B cell (primary cell): ENCODE measurements at regions of chr1 and their contacts with region 1.

Region 1: DNA sequence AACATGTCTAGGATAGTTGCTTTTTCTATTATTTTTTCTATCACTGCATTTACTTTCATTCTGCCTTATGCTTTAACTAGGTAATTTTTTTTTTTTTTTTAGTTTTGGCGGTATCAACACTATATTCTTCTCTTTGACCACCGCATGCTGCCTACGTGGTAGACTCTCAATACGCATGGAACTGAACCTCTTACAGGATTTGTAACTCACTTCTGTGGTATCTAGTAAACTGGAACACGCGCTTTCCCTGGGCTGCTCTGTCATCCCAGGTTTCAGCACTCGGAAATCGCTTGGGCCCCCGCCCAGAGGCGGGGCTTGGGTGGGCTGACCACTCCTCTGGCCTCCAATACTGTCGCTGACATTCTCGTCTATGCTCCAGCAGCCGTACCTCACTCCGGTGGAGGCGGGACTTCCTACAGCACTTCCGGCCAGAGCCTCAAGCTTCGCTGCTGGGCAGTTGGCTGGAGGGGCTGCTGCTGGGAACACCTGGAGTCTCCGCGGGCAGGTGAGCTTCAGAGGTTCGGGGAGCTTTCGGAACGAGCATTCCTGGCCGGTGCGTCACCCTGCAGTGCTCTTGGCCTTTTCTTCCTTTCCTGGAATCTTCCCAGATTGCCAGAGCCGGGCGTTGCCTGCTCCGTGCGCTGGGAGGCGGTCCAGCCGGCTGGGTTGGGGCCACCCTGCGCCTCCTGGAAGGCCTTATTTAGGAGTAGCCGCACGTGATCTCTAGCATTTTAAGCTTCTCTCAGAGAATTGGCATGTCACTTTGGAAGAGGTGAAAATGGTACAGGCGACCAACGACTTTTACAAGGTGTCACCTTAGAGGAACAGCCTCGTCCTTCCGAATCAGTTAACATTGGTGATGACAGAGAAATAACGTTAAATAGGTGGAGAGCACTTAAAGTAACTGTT is at the start of gene TBCE:
- DNase-seq: peak; percentile 84
- ATAC-seq: peak; percentile 100
- H3K4me3 ChIP-seq: peak within 1 kb of the TSS; percentile 79 to 97 (median 86)
- H3K4me3 Mint-ChIP-seq: peak within 1 kb of the TSS; percentile 99
- H3K27ac ChIP-seq: peak within 1 kb of the TSS; percentile 59 to 77
- H3K27ac Mint-ChIP-seq: peak within 1 kb of the TSS; percentile 94
- H3K4me1 ChIP-seq: peaks cover 12% of the 10 kb centered on the region in 2 donors
- H3K4me1 Mint-ChIP-seq: peaks cover 25% of the 10 kb centered on the region
- H3K27me3 ChIP-seq: no peaks in the 10 kb centered on the region
- H3K27me3 Mint-ChIP-seq: no peaks in the 10 kb centered on the region
- CTCF ChIP-seq: no peak
- total RNA-seq, gene TBCE: 18.4 and 22.1 TPM in 2 replicates

Region 2: GRCh38 chr1:234478481-234479309 is 888.6 kb before region 1 on chr1 and contains the start of gene TARBP1:
- CTCF ChIA-PET with region 1: no interaction called
- POLR2A ChIA-PET with region 1: no interaction called
- intact Hi-C with region 1: loop called (anchors 2 kb)
- DNase-seq: peak; percentile 93
- ATAC-seq: peak; percentile 68
- H3K4me3 ChIP-seq: peak within 1 kb of the TSS; percentile 46 to 76 (median 68)
- H3K4me3 Mint-ChIP-seq: peak within 1 kb of the TSS; percentile 87
- H3K27ac ChIP-seq: peak within 1 kb of the TSS; percentile 49 to 69
- H3K27ac Mint-ChIP-seq: peak within 1 kb of the TSS; percentile 89
- H3K4me1 ChIP-seq: peaks cover 30 to 36% of the 10 kb centered on the region in 2 donors
- H3K4me1 Mint-ChIP-seq: peaks cover 38% of the 10 kb centered on the region
- H3K27me3 ChIP-seq: no peaks in the 10 kb centered on the region
- H3K27me3 Mint-ChIP-seq: peaks cover 6% of the 10 kb centered on the region
- CTCF ChIP-seq: no peak
- total RNA-seq, gene TARBP1: 35.4 and 36.0 TPM in 2 replicates

Region 3: DNA sequence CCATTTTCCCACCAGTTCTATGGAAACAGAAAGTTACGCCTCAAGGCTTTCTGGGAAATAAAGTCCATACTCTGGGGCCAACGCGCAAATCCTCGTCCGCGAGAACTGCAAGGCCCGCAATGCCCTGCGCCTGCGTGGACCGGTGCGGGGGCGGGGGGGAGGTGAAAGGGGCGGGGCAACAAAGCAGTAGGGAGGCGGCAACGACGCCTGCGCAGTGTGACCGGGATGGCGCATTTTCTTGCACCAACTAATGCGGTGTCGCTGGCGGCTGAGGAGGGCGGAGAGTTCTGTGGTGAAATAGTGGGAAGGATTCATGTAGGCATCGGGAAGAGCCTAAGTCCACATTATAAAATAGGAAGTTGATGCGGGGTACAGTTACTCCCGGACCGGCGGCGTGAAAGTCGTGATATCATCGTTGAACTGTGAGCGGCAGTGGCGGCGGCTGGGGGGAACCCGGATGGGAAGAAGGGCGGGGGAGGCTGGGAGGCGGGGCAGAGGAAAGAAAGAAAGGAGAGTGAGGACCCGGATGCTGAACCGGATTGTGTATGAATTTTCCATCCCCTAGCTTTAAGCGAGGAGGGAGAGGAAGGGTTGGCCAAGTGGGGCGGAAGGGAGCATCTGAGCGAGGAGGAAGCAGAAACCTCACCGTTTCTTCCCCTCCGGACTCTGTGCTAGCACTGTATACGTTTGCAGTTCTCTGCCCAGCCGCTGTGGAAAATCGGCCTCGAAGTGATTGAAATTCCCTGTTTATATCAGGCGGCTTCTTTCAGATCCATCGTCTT is 38.7 kb before region 1 on chr1 and contains the start of gene GGPS1:
- CTCF ChIA-PET with region 1: interaction called, 3 read pairs
- POLR2A ChIA-PET with region 1: no interaction called
- intact Hi-C with region 1: loop called (anchors 1 kb)
- DNase-seq: peak; percentile 98
- ATAC-seq: peak; percentile 75
- H3K4me3 ChIP-seq: peak within 1 kb of the TSS; percentile 89 to 99 (median 99)
- H3K4me3 Mint-ChIP-seq: no peak within 1 kb of the TSS
- H3K27ac ChIP-seq: peak within 1 kb of the TSS; percentile 89 to 98
- H3K27ac Mint-ChIP-seq: no peak within 1 kb of the TSS
- H3K4me1 ChIP-seq: peaks cover 33 to 58% of the 10 kb centered on the region in 2 donors
- H3K4me1 Mint-ChIP-seq: peaks cover 53% of the 10 kb centered on the region
- H3K27me3 ChIP-seq: no peaks in the 10 kb centered on the region
- H3K27me3 Mint-ChIP-seq: no peaks in the 10 kb centered on the region
- CTCF ChIP-seq: peak; percentile 36
- total RNA-seq, gene GGPS1: 43.6 and 46.8 TPM in 2 replicates

Region 4: GRCh38 chr1:235339746-235340445 is 27.4 kb before region 1 on chr1:
- CTCF ChIA-PET with region 1: no interaction called
- POLR2A ChIA-PET with region 1: no interaction called
- intact Hi-C with region 1: no loop called
- DNase-seq: no peak
- ATAC-seq: no peak
- H3K4me3 ChIP-seq: no peak overlapping the region
- H3K4me3 Mint-ChIP-seq: no peak overlapping the region
- H3K27ac ChIP-seq: no peak overlapping the region
- H3K27ac Mint-ChIP-seq: no peak overlapping the region
- H3K4me1 ChIP-seq: peaks cover 6 to 7% of the 10 kb centered on the region in 2 donors
- H3K4me1 Mint-ChIP-seq: peaks cover 6% of the 10 kb centered on the region
- H3K27me3 ChIP-seq: no peaks in the 10 kb centered on the region
- H3K27me3 Mint-ChIP-seq: no peaks in the 10 kb centered on the region
- CTCF ChIP-seq: no peak

Region 5: DNA sequence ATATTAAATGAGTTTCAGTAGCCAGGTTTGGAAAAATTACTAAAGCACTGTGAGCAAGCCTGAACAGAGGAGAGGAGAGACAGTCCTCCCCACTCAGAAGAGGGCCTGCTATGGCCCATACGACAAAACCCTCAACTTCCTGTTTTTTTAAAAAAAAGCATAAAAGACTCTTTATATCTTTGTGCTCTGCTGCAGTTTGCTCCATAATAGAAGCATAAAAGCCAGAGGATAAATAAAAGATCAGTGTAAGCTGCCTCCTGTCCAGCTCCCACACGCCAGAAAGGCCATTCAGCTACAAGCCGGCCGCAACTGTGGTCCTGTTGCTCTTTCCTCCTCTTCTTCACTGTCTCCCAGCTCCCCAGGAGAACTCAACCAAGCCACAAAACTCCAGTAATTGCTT is 659.9 kb after region 1 on chr1:
- CTCF ChIA-PET with region 1: no interaction called
- POLR2A ChIA-PET with region 1: no interaction called
- intact Hi-C with region 1: no loop called
- DNase-seq: no peak
- ATAC-seq: no peak
- H3K4me3 ChIP-seq: no peak overlapping the region
- H3K4me3 Mint-ChIP-seq: no peak overlapping the region
- H3K27ac ChIP-seq: no peak overlapping the region
- H3K27ac Mint-ChIP-seq: no peak overlapping the region
- H3K4me1 ChIP-seq: no peaks in the 10 kb centered on the region
- H3K4me1 Mint-ChIP-seq: no peaks in the 10 kb centered on the region
- H3K27me3 ChIP-seq: no peaks in the 10 kb centered on the region
- H3K27me3 Mint-ChIP-seq: no peaks in the 10 kb centered on the region
- CTCF ChIP-seq: no peak